ENCODE measurements at regions of chr4 and their contacts with region 1.

Region 1: GRCh38 chr4:101596781-101597552 is 193.6 kb upstream of the BANK1 start:
- DNase-seq: no peak
- ATAC-seq: no peak
- H3K4me3 ChIP-seq: no peak overlapping the region
- H3K27ac ChIP-seq: no peak overlapping the region
- H3K4me1 ChIP-seq: no peaks in the 10 kb centered on the region
- H3K27me3 ChIP-seq: no peaks in the 10 kb centered on the region
- CTCF ChIP-seq: peak; percentile 21; the same call in 1 of the 2 replicates
- POLR2A ChIP-seq: no peak
- RAD21 ChIP-seq: no peak

Region 2: GRCh38 chr4:100288161-100288560 is 1308.8 kb before region 1 on chr4:
- CTCF ChIA-PET with region 1: no interaction called
- POLR2A ChIA-PET with region 1: no interaction called
- dilution Hi-C with region 1: no loop called
- in situ Hi-C with region 1: no loop called
- intact Hi-C with region 1: no loop called
- DNase-seq: peak; percentile 47
- ATAC-seq: no peak
- H3K4me3 ChIP-seq: no peak overlapping the region
- H3K27ac ChIP-seq: no peak overlapping the region
- H3K4me1 ChIP-seq: peaks cover 9% of the 10 kb centered on the region
- H3K27me3 ChIP-seq: no peaks in the 10 kb centered on the region
- CTCF ChIP-seq: no peak
- POLR2A ChIP-seq: no peak
- RAD21 ChIP-seq: no peak

Region 3: DNA sequence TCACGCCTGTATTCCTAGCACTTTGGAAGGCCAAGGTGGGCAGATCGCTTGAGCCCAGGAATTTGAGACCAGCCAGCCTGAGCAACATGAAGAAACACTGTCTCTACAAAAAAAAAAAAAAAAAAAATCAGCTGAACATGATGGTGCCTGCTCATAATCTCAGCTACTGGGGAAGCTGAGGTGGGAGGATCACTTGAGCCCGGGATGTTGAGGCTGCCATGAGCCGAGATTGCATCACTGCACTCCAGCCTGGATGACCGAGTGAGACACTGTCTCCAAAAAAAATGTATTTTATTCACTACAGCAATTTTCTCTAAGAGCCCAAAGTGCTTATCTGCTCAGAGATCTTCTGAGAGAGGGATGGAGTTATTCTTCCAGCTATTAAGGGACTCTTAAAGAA is 33.8 kb before region 1 on chr4:
- CTCF ChIA-PET with region 1: no interaction called
- POLR2A ChIA-PET with region 1: no interaction called
- dilution Hi-C with region 1: no loop called
- in situ Hi-C with region 1: no loop called
- intact Hi-C with region 1: loop called (anchors 1 kb)
- DNase-seq: no peak
- ATAC-seq: no peak
- H3K4me3 ChIP-seq: no peak overlapping the region
- H3K27ac ChIP-seq: no peak overlapping the region
- H3K4me1 ChIP-seq: no peaks in the 10 kb centered on the region
- H3K27me3 ChIP-seq: no peaks in the 10 kb centered on the region
- CTCF ChIP-seq: no peak
- POLR2A ChIP-seq: no peak
- RAD21 ChIP-seq: no peak

Measured in IMR-90 (cell line).